Caco-2 (cell line): ENCODE measurements at regions of chr6 and their contacts with region 1.

Region 1: GRCh38 chr6:56595490-56596122 is 47.1 kb downstream of the DST start:
- DNase-seq: peak in 1 of 2 experiments; percentile 35
- H3K4me3 ChIP-seq: no peak overlapping the region
- H3K4me3 Mint-ChIP-seq: no peak overlapping the region
- H3K27ac Mint-ChIP-seq: no peak overlapping the region
- H3K4me1 ChIP-seq: no peaks in the 10 kb centered on the region
- H3K4me1 Mint-ChIP-seq: no peaks in the 10 kb centered on the region
- H3K27me3 ChIP-seq: no peaks in the 10 kb centered on the region
- H3K27me3 Mint-ChIP-seq: no peaks in the 10 kb centered on the region
- CTCF ChIP-seq: peak; percentile 61 to 67

Region 2: DNA sequence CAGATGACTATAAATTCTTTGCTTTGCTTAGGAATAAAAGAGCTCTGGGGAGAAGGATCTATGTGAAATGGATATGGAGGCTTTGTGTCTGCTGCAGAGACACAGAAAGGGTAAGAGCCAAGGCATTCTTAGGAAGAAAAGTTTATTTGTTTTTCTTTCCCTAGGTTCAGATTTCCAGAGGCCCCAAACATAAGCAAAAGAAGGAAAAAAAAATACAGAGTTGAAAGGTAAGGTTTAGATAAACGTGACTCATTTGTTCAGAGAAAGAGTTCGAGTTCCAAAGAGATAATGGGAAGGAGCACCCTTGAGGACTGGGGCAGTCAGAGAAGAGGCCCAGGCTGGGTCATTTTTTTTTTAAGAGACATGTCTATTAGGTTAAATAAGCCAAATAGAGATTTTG is 692.8 kb before region 1 on chr6:
- CTCF ChIA-PET with region 1: no interaction called
- POLR2A ChIA-PET with region 1: no interaction called
- intact Hi-C with region 1: no loop called
- DNase-seq: no peak
- H3K4me3 ChIP-seq: no peak overlapping the region
- H3K4me3 Mint-ChIP-seq: no peak overlapping the region
- H3K27ac Mint-ChIP-seq: peak overlapping the region; percentile 21
- H3K4me1 ChIP-seq: peaks cover 5% of the 10 kb centered on the region
- H3K4me1 Mint-ChIP-seq: peaks cover 20% of the 10 kb centered on the region
- H3K27me3 ChIP-seq: no peaks in the 10 kb centered on the region
- H3K27me3 Mint-ChIP-seq: no peaks in the 10 kb centered on the region
- CTCF ChIP-seq: no peak

Region 3: DNA sequence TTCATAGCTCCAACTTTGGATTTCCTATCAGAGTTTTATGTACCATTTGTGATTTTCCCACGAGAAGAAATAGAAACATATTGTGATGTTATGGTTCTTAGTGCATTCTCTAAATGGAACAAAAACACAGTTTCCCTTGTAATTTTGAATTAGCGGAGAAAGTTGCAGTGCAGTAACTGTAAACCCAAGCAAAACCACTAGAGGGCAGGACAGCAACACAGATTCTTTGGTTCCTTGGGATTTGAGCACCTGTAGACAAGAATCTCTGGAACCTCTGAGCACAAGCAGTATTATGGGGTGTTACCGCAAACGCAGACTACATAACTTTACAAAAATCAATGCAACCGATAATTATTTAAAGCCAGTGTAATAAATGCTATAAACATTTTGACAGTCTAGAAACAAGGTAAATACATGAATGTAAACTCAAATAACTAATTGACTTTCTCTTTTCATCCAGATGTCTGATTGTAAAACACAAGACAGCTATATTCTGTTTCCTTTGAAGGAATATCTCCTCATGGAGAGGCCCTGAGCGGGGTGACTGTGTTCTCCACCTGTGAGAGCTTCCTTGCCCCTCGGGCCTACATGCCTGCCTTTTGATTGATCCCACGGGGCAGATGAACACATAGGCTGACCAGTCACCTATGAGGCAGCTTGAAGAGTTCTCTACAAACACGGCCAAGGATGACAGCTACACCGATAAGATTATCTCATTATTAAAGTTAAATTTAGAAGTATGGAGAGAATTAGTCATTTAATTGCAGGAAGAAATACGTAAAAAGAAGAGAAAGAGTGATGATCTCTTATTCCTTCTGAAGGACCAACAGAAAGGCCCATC is 280.7 kb before region 1 on chr6:
- CTCF ChIA-PET with region 1: no interaction called
- POLR2A ChIA-PET with region 1: no interaction called
- intact Hi-C with region 1: loop called (anchors 1 kb)
- DNase-seq: peak; percentile 35 to 60
- H3K4me3 ChIP-seq: no peak overlapping the region
- H3K4me3 Mint-ChIP-seq: no peak overlapping the region
- H3K27ac Mint-ChIP-seq: no peak overlapping the region
- H3K4me1 ChIP-seq: no peaks in the 10 kb centered on the region
- H3K4me1 Mint-ChIP-seq: peaks cover 8% of the 10 kb centered on the region
- H3K27me3 ChIP-seq: no peaks in the 10 kb centered on the region
- H3K27me3 Mint-ChIP-seq: no peaks in the 10 kb centered on the region
- CTCF ChIP-seq: peak; percentile 72 to 76

Region 4: GRCh38 chr6:56484669-56485068 is 110.9 kb before region 1 on chr6:
- CTCF ChIA-PET with region 1: no interaction called
- POLR2A ChIA-PET with region 1: no interaction called
- intact Hi-C with region 1: loop called (anchors 5 kb)
- DNase-seq: no peak
- H3K4me3 ChIP-seq: no peak overlapping the region
- H3K4me3 Mint-ChIP-seq: no peak overlapping the region
- H3K27ac Mint-ChIP-seq: no peak overlapping the region
- H3K4me1 ChIP-seq: peaks cover 20% of the 10 kb centered on the region
- H3K4me1 Mint-ChIP-seq: peaks cover 12% of the 10 kb centered on the region
- H3K27me3 ChIP-seq: no peaks in the 10 kb centered on the region
- H3K27me3 Mint-ChIP-seq: no peaks in the 10 kb centered on the region
- CTCF ChIP-seq: no peak

Region 5: DNA sequence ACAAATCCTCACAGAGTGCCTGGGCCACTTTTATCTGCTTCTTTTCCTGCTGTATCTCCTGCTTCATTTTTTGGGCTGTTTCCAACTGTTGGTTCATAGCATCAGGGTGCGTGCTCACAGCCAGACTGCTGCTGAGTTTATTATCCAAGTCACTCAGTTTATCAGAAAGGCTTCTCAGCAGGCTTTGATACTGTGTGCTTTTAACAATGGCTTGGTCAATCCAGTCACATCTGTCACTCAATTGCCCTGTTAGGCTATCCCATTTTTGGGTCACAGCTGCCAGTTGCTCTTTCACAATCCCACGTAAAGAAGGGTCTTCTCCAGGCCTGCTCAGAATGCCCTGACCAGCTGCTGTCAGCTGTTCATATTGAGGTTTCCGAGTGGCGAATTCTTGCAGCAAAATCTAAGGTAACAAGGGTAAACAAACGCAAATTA is 40.2 kb before region 1 on chr6:
- CTCF ChIA-PET with region 1: no interaction called
- POLR2A ChIA-PET with region 1: no interaction called
- intact Hi-C with region 1: no loop called
- DNase-seq: no peak
- H3K4me3 ChIP-seq: no peak overlapping the region
- H3K4me3 Mint-ChIP-seq: no peak overlapping the region
- H3K27ac Mint-ChIP-seq: peak overlapping the region; percentile 45
- H3K4me1 ChIP-seq: no peaks in the 10 kb centered on the region; the same call in 1 of the 2 replicates
- H3K4me1 Mint-ChIP-seq: peaks cover 7% of the 10 kb centered on the region
- H3K27me3 ChIP-seq: no peaks in the 10 kb centered on the region
- H3K27me3 Mint-ChIP-seq: no peaks in the 10 kb centered on the region
- CTCF ChIP-seq: no peak

Region 6: DNA sequence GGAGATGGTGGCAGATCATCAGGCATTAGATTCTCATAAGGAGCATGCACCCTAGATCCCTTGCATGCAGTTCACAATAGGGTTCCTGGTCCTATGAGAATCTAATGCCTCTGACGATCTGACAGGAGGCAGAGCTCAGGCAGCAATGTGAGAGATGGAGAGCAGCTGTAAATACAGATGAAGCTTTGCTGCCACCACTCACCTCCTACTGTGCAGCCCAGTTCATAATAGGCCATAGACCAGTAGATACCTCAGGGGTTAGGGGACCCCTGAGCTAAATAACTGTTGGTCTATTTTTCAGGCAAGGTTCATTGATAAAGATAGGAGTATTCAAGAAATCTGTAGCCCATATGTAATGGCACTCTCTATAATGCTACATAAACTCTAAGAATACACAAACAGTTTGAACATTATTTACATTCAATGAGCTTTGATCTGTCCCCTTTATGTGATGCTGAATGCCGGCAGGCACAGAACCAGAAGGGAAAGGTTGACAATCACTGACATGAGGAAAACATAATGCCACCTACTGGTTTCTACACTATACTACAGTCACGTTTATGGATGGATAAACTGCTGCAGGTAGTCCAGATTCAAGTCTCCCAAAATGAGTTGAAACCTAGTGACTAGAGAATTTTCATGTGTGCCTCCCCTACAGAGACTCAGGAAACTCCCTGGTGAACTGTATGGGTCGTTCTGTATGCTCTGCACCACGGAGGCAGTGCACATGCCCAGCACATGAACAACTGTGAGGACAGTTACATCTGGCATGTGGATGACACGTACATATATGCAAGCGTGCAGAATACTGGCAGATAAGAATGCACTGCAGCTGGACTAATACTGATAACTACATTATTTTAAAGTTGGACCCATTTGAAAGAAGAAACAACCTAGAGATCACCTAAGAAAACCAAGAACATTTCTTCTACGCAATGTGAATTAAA is 24.9 kb before region 1 on chr6:
- CTCF ChIA-PET with region 1: interaction called, 13 read pairs
- POLR2A ChIA-PET with region 1: no interaction called
- intact Hi-C with region 1: no loop called
- DNase-seq: peak in 1 of 2 experiments; percentile 37
- H3K4me3 ChIP-seq: no peak overlapping the region
- H3K4me3 Mint-ChIP-seq: no peak overlapping the region
- H3K27ac Mint-ChIP-seq: no peak overlapping the region
- H3K4me1 ChIP-seq: no peaks in the 10 kb centered on the region
- H3K4me1 Mint-ChIP-seq: no peaks in the 10 kb centered on the region
- H3K27me3 ChIP-seq: no peaks in the 10 kb centered on the region
- H3K27me3 Mint-ChIP-seq: no peaks in the 10 kb centered on the region
- CTCF ChIP-seq: peak; percentile 30 to 57

Region 7: GRCh38 chr6:56624046-56624727 is 28.6 kb after region 1 on chr6:
- CTCF ChIA-PET with region 1: no interaction called
- POLR2A ChIA-PET with region 1: no interaction called
- intact Hi-C with region 1: no loop called
- DNase-seq: peak in 1 of 2 experiments; percentile 10
- H3K4me3 ChIP-seq: no peak overlapping the region
- H3K4me3 Mint-ChIP-seq: no peak overlapping the region
- H3K27ac Mint-ChIP-seq: no peak overlapping the region
- H3K4me1 ChIP-seq: peaks cover 11% of the 10 kb centered on the region
- H3K4me1 Mint-ChIP-seq: peaks cover 13% of the 10 kb centered on the region
- H3K27me3 ChIP-seq: no peaks in the 10 kb centered on the region
- H3K27me3 Mint-ChIP-seq: no peaks in the 10 kb centered on the region
- CTCF ChIP-seq: no peak

Region 8: DNA sequence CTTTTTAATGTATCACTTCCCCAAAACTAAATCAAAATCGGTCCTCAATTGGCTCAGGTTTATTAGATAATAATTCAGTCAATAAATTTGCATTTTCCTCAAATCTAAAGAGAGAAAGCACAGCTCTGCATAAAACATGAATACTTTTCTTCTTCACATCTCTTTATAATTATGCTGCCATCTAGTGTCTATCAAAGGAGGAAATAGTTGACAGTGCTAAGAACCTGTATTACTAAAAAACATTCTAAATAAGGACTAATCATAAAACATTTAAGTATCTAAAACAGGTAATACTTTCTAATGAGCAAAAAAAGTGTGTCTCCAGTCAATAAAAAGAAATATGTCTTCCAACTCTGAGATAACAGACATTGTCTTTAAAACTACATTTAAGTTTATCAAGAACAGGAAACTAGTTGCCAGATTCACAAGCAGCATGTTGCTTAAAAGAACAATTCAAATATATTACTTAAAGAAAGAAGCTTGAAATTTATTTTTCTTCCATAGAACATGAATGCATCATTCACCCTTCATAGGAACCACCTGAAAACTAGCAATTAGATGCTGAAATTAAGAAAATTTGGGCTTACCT is 103.6 kb after region 1 on chr6:
- CTCF ChIA-PET with region 1: no interaction called
- POLR2A ChIA-PET with region 1: no interaction called
- intact Hi-C with region 1: no loop called
- DNase-seq: no peak
- H3K4me3 ChIP-seq: no peak overlapping the region
- H3K4me3 Mint-ChIP-seq: no peak overlapping the region
- H3K27ac Mint-ChIP-seq: no peak overlapping the region
- H3K4me1 ChIP-seq: peaks cover 8% of the 10 kb centered on the region
- H3K4me1 Mint-ChIP-seq: peaks cover 7% of the 10 kb centered on the region
- H3K27me3 ChIP-seq: no peaks in the 10 kb centered on the region
- H3K27me3 Mint-ChIP-seq: no peaks in the 10 kb centered on the region
- CTCF ChIP-seq: peak; percentile 38 to 46